Psoas muscle (tissue), 8 donors: ENCODE measurements at regions of chr16 and their contacts with region 1.

Region 1: GRCh38 chr16:70646260-70647241 is at the start of gene IL34:
- DNase-seq: peak; percentile 81 to 93
- ATAC-seq: peak; percentile 91 to 94 (median 93)
- H3K4me3 ChIP-seq: peak within 1 kb of the TSS; percentile 47
- H3K27ac ChIP-seq: peak within 1 kb of the TSS; percentile 81
- H3K4me1 ChIP-seq: peaks cover 13% of the 10 kb centered on the region
- H3K27me3 ChIP-seq: no peaks in the 10 kb centered on the region
- CTCF ChIP-seq: no peak
- total RNA-seq, gene IL34: 6.5 to 18.5 (median 9.0) TPM

Region 2: DNA sequence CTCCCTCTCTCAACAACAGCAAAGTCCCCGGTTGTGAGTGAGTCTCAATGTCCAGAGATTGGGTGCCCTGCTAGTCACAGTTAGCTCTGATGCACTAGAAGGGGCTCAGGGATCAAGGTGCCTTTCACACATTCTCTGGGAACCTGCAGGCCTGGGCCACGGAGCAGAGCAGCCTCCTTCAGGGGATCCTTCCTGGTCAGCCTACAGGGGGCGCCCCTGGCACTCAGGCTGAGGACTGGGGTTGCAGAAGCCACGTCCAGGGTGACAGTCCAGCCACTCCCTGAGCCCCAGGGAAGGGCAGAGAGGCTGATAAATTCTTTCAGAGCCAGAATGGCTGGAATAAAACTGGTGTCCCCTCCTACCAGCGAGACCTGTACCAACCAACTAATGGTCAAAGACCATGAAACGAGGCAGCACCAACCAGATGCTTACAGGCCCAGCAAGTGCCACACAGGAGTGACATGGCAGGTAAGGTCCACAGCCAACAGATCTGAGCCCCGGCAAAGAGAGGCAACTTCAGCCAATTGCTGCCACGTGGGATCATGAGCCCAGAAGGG is 251.1 kb before region 1 on chr16:
- intact Hi-C with region 1: loop called in 1 of 2 experiments (anchors 5 kb)
- DNase-seq: peak; percentile 71 to 87
- ATAC-seq: peak; percentile 67 to 75 (median 73)
- H3K4me3 ChIP-seq: no peak overlapping the region
- H3K27ac ChIP-seq: no peak overlapping the region
- H3K4me1 ChIP-seq: peaks cover 15% of the 10 kb centered on the region
- H3K27me3 ChIP-seq: no peaks in the 10 kb centered on the region
- CTCF ChIP-seq: peak; percentile 73

Region 3: DNA sequence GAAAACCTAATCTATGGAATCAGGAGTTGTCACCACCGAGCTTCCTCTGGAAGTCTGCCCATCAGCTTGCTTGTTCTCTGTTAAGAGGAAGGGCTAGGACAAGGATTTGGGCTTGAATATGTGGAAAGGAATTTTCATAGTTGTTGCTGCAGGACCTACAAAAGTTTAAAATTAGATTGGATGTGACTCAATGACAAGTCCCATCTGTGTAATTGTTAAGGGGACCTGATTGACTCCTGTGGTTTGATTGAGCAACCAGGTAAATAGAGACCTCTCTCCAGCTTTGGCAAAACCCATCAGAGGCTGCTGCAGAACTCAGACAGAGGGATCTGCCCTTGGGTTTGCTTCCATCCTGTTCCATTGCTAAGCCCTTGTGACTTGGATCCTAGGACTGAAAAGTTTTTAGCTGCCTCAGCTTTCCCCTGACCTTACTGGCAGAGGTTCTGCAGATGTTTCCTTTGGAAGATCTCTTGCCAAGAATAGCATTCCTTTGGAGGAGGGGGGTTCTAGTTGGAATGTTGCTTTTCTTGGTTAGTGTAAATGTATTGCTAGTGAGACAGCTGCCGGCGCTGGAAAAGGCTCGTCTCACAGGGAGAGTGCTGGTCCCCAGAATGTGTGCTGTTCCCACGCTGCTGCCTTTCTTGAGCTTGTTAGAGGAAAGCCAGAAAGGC is 73.0 kb before region 1 on chr16:
- intact Hi-C with region 1: loop called (anchors 2 to 5 kb)
- DNase-seq: no peak
- ATAC-seq: peak; percentile 63 to 84 (median 74)
- H3K4me3 ChIP-seq: peak overlapping the region; percentile 1
- H3K27ac ChIP-seq: peak overlapping the region; percentile 74
- H3K4me1 ChIP-seq: peaks cover 49% of the 10 kb centered on the region
- H3K27me3 ChIP-seq: no peaks in the 10 kb centered on the region
- CTCF ChIP-seq: no peak

Region 4: GRCh38 chr16:70579648-70580630 is 66.6 kb before region 1 on chr16:
- intact Hi-C with region 1: loop called in 1 of 2 experiments (anchors 2 kb)
- DNase-seq: peak; percentile 41 to 78
- ATAC-seq: peak in 2 of 4 donors; percentile 25 to 31
- H3K4me3 ChIP-seq: peak overlapping the region; percentile 28
- H3K27ac ChIP-seq: no peak overlapping the region
- H3K4me1 ChIP-seq: peaks cover 18% of the 10 kb centered on the region
- H3K27me3 ChIP-seq: no peaks in the 10 kb centered on the region
- CTCF ChIP-seq: no peak

Region 5: GRCh38 chr16:70610273-70611223 is 36.0 kb before region 1 on chr16:
- intact Hi-C with region 1: no loop called
- DNase-seq: peak; percentile 53 to 78
- ATAC-seq: peak; percentile 93 to 97 (median 94)
- H3K4me3 ChIP-seq: no peak overlapping the region
- H3K27ac ChIP-seq: peak overlapping the region; percentile 36
- H3K4me1 ChIP-seq: peaks cover 14% of the 10 kb centered on the region
- H3K27me3 ChIP-seq: no peaks in the 10 kb centered on the region
- CTCF ChIP-seq: no peak